Mammary epithelial cell (primary cell): ENCODE measurements at regions of chr6 and their contacts with region 1.

Region 1: GRCh38 chr6:21593412-21593926 is at the start of gene SOX4:
- DNase-seq: peak; percentile 95
- H3K4me3 ChIP-seq: peak within 1 kb of the TSS; percentile 85 to 98 (median 97)
- H3K27ac ChIP-seq: peak within 1 kb of the TSS; percentile 64
- H3K4me1 ChIP-seq: peaks cover 13% of the 10 kb centered on the region
- H3K27me3 ChIP-seq: no peaks in the 10 kb centered on the region
- CTCF ChIP-seq: no peak
- total RNA-seq, gene SOX4: 22.3 to 64.8 TPM

Region 2: DNA sequence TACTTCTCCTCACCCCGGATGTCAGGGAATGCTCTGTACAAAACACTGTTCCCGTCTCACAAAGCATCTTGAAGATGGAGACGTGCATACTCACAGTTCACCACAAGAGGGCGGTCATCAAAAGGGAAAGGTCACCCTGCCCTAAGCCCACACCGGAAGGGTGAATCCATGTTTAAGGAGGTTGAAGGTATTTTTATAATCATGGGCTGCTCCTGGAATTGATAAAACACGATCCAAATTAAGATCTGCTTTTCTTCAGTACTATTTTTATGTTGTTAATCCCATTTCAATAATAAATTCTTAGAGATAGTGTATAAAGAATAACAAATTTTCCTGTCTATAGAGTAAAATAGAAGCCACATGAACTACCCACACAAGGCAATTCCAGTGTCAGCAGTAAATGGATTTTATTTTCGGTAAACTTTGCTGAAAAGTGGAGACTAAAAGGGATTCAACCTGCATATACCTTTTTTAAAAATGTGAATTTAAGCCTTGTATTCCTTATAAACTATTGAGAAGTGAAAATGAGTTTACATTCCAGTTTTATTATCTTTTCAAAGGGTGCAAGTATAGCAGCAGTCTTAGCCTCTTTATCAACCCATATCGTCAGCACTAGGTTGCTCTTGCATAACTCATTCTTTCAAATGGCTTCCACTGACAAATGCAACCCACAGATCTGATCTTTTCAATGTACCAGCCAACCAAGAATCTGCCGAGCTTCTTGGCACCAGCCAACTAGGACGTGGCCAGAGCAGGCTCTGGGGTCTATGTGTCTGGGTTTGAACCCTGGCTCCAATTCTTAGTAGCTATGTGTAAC is 1301.5 kb before region 1 on chr6:
- CTCF ChIA-PET with region 1: no interaction called
- dilution Hi-C with region 1: no loop called
- in situ Hi-C with region 1: no loop called
- intact Hi-C with region 1: loop called (anchors 5 kb)
- DNase-seq: peak; percentile 67
- H3K4me3 ChIP-seq: no peak overlapping the region
- H3K27ac ChIP-seq: no peak overlapping the region
- H3K4me1 ChIP-seq: no peaks in the 10 kb centered on the region
- H3K27me3 ChIP-seq: no peaks in the 10 kb centered on the region
- CTCF ChIP-seq: peak; percentile 80 to 89

Region 3: DNA sequence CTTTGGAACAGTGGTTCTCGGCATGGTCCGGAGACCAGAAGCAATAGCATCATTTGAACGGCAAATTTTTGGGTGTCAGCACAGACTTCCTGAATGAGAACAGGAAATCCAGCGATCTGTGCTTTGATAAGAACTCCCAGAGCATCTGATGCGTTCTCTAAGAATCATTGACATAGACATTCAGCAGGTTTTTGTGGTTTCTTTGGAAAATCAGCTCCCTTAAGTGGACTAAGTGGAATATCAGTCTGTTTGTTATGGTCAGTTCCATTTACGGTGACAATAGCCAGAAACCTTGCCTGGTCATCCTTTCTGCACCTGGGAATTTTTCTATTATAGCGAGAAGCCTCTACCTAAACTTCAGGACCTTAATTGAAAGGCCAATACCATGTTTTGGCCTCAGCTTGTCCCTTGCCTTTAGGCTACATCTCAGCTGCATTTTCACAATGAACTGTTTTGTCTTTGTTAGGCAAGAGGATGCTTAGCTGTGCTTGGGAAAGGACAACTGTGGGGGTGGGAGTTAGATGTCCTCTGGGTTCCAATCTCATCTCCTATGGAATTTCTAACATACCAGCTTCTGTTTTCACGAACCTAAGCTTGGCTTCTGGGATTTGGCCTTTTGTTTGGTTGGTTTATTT is 759.5 kb before region 1 on chr6:
- CTCF ChIA-PET with region 1: no interaction called
- dilution Hi-C with region 1: no loop called
- in situ Hi-C with region 1: no loop called
- intact Hi-C with region 1: no loop called
- DNase-seq: peak; percentile 58
- H3K4me3 ChIP-seq: no peak overlapping the region
- H3K27ac ChIP-seq: no peak overlapping the region
- H3K4me1 ChIP-seq: peaks cover 23% of the 10 kb centered on the region
- H3K27me3 ChIP-seq: no peaks in the 10 kb centered on the region
- CTCF ChIP-seq: no peak

Region 4: GRCh38 chr6:20877008-20877937 is 716.2 kb before region 1 on chr6:
- CTCF ChIA-PET with region 1: interaction called, 3 read pairs
- dilution Hi-C with region 1: no loop called
- in situ Hi-C with region 1: loop called (anchors 10 kb)
- intact Hi-C with region 1: loop called (anchors 1 kb)
- DNase-seq: peak; percentile 98
- H3K4me3 ChIP-seq: no peak overlapping the region
- H3K27ac ChIP-seq: peak overlapping the region; percentile 88
- H3K4me1 ChIP-seq: peaks cover 27% of the 10 kb centered on the region
- H3K27me3 ChIP-seq: no peaks in the 10 kb centered on the region
- CTCF ChIP-seq: no peak

Region 5: GRCh38 chr6:21402368-21402767 is 191.1 kb before region 1 on chr6:
- CTCF ChIA-PET with region 1: no interaction called
- dilution Hi-C with region 1: no loop called
- in situ Hi-C with region 1: no loop called
- intact Hi-C with region 1: loop called (anchors 5 kb)
- DNase-seq: peak; percentile 23
- H3K4me3 ChIP-seq: no peak overlapping the region
- H3K27ac ChIP-seq: no peak overlapping the region
- H3K4me1 ChIP-seq: peaks cover 5% of the 10 kb centered on the region
- H3K27me3 ChIP-seq: no peaks in the 10 kb centered on the region
- CTCF ChIP-seq: no peak

Region 6: DNA sequence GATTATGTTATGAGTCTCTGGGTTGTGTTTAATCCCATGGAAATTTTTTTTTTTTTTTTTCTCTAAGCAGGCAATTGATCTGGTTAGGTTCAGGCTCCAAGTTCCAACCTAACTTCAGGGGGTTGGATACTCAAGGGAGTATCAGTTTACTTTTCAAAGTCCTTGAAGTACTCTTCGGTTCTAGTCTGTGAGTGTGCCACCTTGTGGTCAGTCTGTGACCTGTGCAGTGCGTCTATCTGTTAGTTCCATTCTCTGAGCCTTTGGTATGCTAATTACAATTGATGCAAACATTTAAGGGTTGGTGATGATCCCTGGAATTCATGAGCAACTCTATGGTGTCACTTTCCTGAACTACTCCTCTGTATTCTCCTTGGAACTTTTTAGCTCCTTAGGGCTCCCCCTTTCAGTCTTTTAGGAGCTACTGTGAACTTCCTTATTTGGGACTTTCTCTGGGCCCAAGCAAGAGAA is 342.1 kb after region 1 on chr6:
- CTCF ChIA-PET with region 1: interaction called, 3 read pairs
- dilution Hi-C with region 1: no loop called
- in situ Hi-C with region 1: no loop called
- intact Hi-C with region 1: loop called (anchors 1 kb)
- DNase-seq: peak; percentile 51
- H3K4me3 ChIP-seq: no peak overlapping the region
- H3K27ac ChIP-seq: no peak overlapping the region
- H3K4me1 ChIP-seq: no peaks in the 10 kb centered on the region
- H3K27me3 ChIP-seq: no peaks in the 10 kb centered on the region
- CTCF ChIP-seq: peak; percentile 55 to 59

Region 7: DNA sequence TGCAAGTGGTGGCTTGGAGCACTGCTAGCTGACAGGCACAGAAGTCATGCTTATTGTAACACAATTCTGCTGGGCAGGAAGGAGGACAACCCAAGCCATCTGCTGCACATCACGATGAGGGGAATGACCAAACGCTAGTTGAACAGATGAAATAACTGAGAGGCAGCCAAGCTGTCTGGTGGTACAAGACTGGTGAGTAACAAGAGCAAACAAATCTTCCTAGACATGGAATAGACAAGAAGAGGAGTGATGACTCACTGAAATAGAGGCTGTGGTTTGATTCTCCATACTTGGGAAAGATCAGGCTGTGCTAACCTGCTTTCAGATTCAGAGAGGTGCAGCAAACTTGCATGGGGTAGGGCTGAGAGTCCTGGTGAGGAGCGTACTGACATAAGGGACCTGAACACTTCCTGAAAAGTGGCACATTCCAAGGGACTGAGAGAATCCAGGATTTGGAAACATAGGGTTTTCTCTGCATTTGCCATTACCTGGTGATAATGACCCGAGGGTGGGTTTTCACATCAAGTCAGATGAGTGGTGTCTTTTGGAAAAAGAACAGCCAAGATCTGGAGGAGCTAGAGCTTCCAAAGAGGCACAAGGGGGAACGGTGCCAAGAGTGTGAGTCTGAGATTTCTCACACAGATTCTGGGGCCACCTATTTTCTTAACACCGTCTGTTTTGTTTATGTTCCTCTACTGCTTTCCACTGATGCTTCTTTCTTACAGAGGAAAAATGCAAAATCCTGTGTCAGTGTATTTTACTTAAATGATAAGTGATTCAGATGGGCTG is 643.4 kb after region 1 on chr6:
- CTCF ChIA-PET with region 1: no interaction called
- dilution Hi-C with region 1: no loop called
- in situ Hi-C with region 1: no loop called
- intact Hi-C with region 1: loop called (anchors 5 kb)
- DNase-seq: peak; percentile 97
- H3K4me3 ChIP-seq: peak overlapping the region in 1 of 3 experiments; percentile 21
- H3K27ac ChIP-seq: peak overlapping the region; percentile 81
- H3K4me1 ChIP-seq: peaks cover 21% of the 10 kb centered on the region
- H3K27me3 ChIP-seq: no peaks in the 10 kb centered on the region
- CTCF ChIP-seq: no peak

Region 8: DNA sequence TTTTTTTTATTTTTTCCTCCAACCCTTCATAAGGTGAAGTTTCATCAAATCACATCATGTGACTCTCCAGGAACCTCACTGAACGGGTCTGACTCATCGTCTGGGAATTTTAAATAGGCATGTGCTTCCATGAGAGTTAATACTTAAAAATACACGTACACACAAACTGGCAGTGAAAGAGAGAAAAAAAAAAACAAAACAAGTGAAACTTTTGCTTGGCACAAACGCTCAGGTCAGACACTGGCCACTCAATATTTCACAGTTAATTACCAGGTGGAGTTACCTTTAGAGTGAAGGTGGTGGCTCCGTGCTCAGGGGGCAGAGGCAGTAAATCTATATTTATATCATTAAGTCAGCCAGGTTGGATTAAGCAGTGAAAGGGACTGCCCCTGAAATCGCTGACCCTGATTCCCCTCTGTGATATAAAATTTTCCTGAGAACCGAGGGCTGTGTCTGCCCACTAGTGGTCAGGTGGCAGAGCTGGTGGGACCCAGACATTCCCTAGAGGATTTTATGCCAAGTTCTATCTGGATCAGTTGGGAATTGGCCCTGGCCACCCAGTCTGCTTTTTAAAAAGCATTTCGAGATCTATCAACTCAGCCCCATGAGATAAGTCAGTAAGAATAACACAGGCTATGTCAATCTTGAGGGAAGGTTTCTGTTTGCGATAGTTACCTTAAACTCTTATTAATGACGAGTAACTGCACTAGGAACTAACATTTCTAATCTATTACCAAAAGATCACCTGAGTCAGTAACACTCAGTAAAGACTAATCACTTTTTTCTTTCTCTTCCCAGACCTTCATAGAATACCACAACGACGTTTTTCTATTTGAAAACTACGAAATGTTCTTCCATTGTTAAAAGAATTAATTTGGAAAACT is 1235.0 kb after region 1 on chr6:
- CTCF ChIA-PET with region 1: no interaction called
- dilution Hi-C with region 1: no loop called
- in situ Hi-C with region 1: no loop called
- intact Hi-C with region 1: loop called (anchors 5 kb)
- DNase-seq: peak; percentile 97
- H3K4me3 ChIP-seq: peak overlapping the region in 2 of 3 experiments; percentile 5 to 19
- H3K27ac ChIP-seq: peak overlapping the region; percentile 90
- H3K4me1 ChIP-seq: peaks cover 21% of the 10 kb centered on the region
- H3K27me3 ChIP-seq: no peaks in the 10 kb centered on the region
- CTCF ChIP-seq: peak; percentile 80 to 85